ENCODE measurements at regions of chr19 and their contacts with region 1.

Region 1: DNA sequence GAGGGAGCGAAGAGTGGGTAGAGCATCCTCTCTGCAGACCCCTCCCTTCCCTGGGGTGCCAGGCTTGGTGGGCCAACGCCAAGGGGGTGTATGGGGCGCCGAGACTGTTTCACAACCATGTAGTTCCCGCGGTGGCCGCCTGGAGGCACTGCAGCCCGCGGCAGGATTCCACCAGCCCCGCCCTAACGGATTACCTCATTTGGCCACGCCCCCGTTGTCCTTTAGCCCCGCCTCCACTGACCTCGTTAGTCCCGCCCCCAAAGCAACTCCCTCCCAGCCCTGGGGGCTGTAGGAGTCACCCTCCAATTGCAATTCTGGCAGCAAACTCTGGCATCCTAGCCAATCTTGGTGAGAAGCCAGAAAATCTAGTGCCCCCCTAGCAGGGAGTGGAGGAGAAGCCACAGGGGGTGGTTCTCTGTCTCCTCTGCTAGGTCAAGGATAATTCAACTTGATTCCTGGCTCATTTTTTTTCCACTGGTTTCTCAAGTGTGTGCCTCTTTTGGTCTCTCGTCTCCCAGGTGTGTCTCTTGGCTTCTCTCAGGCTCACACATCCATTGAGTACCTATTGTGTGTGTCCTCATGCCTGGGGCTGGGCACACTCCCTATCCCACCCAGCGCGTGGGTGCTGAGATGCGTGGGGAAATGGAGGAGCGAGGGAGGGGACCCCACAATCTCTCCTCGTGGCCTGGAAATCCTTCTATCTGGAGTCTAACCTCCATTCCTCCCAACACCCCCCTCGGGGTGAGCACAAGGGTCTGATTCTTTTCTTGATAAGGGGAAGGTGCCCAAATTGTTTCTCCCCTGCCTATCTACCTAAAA is 2.0 kb downstream of the OLFM2 start:
- DNase-seq: peak; percentile 69
- ATAC-seq: peak; percentile 86
- H3K4me3 ChIP-seq: no peak overlapping the region
- H3K27ac ChIP-seq: no peak overlapping the region
- H3K4me1 ChIP-seq: peaks cover 6% of the 10 kb centered on the region; the same call in 1 of the 2 replicates
- H3K27me3 ChIP-seq: peaks cover 22% of the 10 kb centered on the region
- CTCF ChIP-seq: peak; percentile 94
- POLR2A ChIP-seq: 0 out of 2 replicates have a peak, but pooled peaks have one; percentile 34
- RAD21 ChIP-seq: peak; percentile 97

Region 2: GRCh38 chr19:9891609-9892373 is 42.5 kb before region 1 on chr19:
- CTCF ChIA-PET with region 1: no interaction called
- POLR2A ChIA-PET with region 1: no interaction called
- dilution Hi-C with region 1: no loop called
- in situ Hi-C with region 1: no loop called
- intact Hi-C with region 1: no loop called
- DNase-seq: no peak
- ATAC-seq: no peak
- H3K4me3 ChIP-seq: no peak overlapping the region
- H3K27ac ChIP-seq: no peak overlapping the region
- H3K4me1 ChIP-seq: no peaks in the 10 kb centered on the region
- H3K27me3 ChIP-seq: no peaks in the 10 kb centered on the region; the same call in 1 of the 2 replicates
- CTCF ChIP-seq: no peak
- POLR2A ChIP-seq: no peak
- RAD21 ChIP-seq: no peak

Region 3: DNA sequence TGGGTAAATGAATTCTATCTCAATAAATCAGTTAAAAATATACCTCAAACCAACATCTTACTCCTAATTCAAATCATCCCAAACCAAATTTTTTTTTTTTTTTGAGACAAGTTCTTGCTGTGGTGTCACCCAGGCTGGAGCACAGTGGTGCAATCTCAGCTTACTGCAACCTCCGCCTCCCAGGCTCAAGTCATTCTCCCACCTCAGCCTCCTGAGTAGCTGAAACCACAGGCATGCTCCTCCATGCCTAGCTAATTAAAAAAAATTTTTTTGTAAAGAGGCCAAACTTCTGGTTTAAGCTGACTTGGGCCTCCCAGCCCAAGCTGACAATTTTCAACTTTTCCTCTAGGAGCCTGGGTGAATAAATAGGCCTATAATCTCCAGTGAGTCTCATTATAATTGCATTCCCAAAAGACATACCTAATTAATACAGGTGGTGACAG is 24.1 kb after region 1 on chr19:
- CTCF ChIA-PET with region 1: no interaction called
- POLR2A ChIA-PET with region 1: no interaction called
- dilution Hi-C with region 1: no loop called
- in situ Hi-C with region 1: no loop called
- intact Hi-C with region 1: no loop called
- DNase-seq: peak; percentile 91
- ATAC-seq: peak; percentile 96
- H3K4me3 ChIP-seq: no peak overlapping the region
- H3K27ac ChIP-seq: peak overlapping the region; percentile 64; the same call in 1 of the 2 replicates
- H3K4me1 ChIP-seq: peaks cover 5% of the 10 kb centered on the region
- H3K27me3 ChIP-seq: no peaks in the 10 kb centered on the region
- CTCF ChIP-seq: no peak
- POLR2A ChIP-seq: no peak
- RAD21 ChIP-seq: no peak

Region 4: DNA sequence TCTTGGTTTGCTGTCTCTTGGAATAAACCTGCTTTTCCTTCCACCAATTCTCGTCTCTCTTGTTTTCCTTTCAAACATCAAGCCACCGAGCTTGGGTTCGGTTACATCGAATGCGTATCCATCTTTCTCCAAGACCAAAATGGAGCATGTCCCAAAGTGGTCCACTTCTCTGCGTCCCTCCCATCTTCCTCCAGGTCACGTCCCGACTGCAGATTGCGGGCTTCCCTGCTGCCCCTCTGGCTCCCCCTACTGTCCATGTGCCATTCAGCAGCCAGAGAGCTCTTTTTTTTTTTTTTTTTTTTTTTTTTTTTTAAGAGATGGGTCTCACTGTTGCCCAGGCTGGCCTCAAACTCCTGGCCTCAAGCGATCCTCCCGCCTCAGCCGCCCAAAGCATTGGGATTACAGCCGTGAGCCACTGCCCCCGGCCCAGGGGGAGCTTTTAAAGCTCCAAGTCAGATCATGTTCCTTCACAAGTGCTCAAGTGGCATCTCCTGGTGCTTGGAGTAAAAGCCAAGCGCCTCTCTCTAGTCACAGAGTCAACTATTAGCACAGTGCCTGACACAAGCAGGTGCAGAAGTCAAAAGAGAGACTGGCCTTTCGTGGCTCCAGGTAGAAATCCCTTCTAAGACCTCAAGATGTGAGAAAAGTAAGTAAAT is 66.0 kb after region 1 on chr19:
- CTCF ChIA-PET with region 1: interaction called, 3 read pairs
- POLR2A ChIA-PET with region 1: no interaction called
- dilution Hi-C with region 1: no loop called
- in situ Hi-C with region 1: loop called (anchors 5 kb)
- intact Hi-C with region 1: loop called (anchors 1 kb)
- DNase-seq: peak; percentile 70
- ATAC-seq: peak; percentile 92
- H3K4me3 ChIP-seq: no peak overlapping the region
- H3K27ac ChIP-seq: no peak overlapping the region
- H3K4me1 ChIP-seq: 0 out of 2 replicates have a peak, but pooled peaks cover 1% of the 10 kb centered on the region
- H3K27me3 ChIP-seq: no peaks in the 10 kb centered on the region
- CTCF ChIP-seq: peak; percentile 89
- POLR2A ChIP-seq: no peak
- RAD21 ChIP-seq: peak; percentile 85

Region 5: GRCh38 chr19:10027158-10027693 is 92.9 kb after region 1 on chr19:
- CTCF ChIA-PET with region 1: interaction called, 30 read pairs
- POLR2A ChIA-PET with region 1: interaction called, 5 read pairs
- dilution Hi-C with region 1: no loop called
- in situ Hi-C with region 1: loop called (anchors 5 kb)
- intact Hi-C with region 1: loop called (anchors 1 kb)
- DNase-seq: no peak
- ATAC-seq: no peak
- H3K4me3 ChIP-seq: no peak overlapping the region
- H3K27ac ChIP-seq: no peak overlapping the region
- H3K4me1 ChIP-seq: 0 out of 2 replicates have a peak, but pooled peaks cover 2% of the 10 kb centered on the region
- H3K27me3 ChIP-seq: peaks cover 22% of the 10 kb centered on the region
- CTCF ChIP-seq: no peak
- POLR2A ChIP-seq: no peak
- RAD21 ChIP-seq: no peak

Region 6: DNA sequence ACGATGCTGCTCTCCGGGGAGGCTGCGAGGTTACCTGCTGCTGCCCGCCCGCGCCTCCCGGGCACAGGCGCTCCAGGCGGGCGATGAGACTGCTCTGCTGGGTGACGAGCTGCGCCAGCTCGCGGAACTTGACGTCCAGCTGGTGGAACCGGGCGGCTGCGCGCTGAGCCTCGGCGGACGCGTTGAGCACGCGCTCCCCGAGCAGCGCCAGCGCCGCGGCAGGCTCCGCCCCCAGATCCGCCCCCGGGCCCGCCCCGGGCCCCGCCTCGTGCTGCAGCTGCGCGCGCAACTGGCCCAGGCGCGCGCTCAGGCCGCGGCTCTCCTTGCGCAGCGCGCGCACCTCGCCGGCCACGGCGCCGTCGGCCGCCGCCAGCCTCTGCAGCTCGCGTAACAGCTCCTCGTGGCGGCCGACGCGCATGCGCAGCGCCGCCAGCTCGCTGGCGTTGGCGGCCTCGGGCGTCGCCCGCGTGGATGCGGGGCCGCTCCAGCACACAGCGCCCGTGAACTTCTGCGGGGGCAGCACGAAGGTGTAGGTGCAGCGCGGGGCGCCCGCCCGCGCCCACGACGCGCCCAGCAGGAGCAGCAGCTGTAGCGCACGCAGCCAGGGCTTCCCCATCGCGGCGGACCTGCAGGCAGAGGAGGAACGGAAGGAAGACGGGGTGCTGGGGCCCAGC is 161.7 kb after region 1 on chr19:
- CTCF ChIA-PET with region 1: interaction called, 3 read pairs
- POLR2A ChIA-PET with region 1: no interaction called
- dilution Hi-C with region 1: no loop called
- in situ Hi-C with region 1: no loop called
- intact Hi-C with region 1: loop called (anchors 5 kb)
- DNase-seq: peak; percentile 89
- ATAC-seq: peak; percentile 98
- H3K4me3 ChIP-seq: peak overlapping the region; percentile 55
- H3K27ac ChIP-seq: peak overlapping the region; percentile 79
- H3K4me1 ChIP-seq: peaks cover 4% of the 10 kb centered on the region
- H3K27me3 ChIP-seq: no peaks in the 10 kb centered on the region
- CTCF ChIP-seq: no peak
- POLR2A ChIP-seq: no peak
- RAD21 ChIP-seq: no peak

Region 7: DNA sequence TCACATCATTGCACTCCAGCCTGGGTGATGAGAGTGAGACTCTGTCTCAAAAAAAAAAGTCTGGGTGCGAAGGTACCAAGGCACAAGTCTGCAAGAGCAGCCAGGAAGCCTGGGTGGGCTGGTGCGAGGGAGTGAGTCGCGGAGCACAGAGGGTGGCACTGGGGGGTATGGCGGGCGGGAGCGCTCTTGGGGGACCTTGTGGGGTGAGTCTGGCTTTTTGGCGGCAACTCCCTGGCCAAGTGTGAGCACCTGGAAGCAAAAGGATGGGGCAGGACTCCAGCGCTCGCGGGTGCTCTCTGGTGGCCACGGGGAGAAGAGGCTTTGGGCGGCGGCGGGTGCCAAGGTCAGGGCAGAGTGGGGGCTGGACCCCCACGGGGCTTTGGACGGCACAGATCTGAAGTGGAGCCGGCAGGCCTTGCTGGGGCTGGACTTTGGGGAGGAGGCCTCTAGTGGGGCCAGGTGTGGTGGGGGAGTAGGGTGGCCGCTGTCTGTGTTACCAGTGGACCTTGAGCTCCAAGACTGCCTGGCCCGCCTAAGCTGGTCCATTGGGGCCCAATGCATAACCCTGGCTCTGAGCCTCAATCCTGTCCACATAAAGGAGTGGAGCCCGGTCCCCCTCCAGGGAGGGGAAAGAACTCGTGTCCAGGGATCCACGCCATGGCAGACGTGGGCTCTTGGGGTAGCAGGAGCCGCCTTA is 178.7 kb after region 1 on chr19:
- CTCF ChIA-PET with region 1: no interaction called
- POLR2A ChIA-PET with region 1: no interaction called
- dilution Hi-C with region 1: no loop called
- in situ Hi-C with region 1: no loop called
- intact Hi-C with region 1: loop called (anchors 1 kb)
- DNase-seq: no peak
- ATAC-seq: peak; percentile 61
- H3K4me3 ChIP-seq: no peak overlapping the region
- H3K27ac ChIP-seq: no peak overlapping the region
- H3K4me1 ChIP-seq: no peaks in the 10 kb centered on the region
- H3K27me3 ChIP-seq: no peaks in the 10 kb centered on the region
- CTCF ChIP-seq: peak; percentile 56
- POLR2A ChIP-seq: 0 out of 2 replicates have a peak, but pooled peaks have one; percentile 7
- RAD21 ChIP-seq: peak; percentile 46

Region 8: DNA sequence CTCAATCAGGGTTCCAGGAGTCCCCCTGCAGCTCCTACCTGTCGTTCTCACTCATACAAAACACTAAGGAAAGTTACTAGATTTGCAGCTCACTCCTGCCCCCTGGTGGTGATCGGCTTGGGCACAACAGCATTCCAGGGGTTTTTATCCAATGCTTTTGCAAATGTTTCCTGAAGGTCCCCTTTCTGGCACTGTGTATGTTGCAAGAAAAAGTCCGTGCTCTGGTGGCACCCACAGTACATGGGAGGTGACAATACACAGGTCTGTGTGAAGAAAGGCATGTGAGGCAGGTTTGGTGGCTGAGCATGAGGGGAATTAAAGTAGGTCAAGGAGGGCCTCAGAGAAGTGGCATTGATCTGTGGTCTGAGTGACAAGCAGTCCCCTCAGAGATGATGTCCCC is 454.6 kb after region 1 on chr19:
- CTCF ChIA-PET with region 1: interaction called, 4 read pairs
- POLR2A ChIA-PET with region 1: no interaction called
- dilution Hi-C with region 1: no loop called
- in situ Hi-C with region 1: loop called (anchors 10 kb)
- intact Hi-C with region 1: loop called (anchors 1 kb)
- DNase-seq: peak; percentile 71
- ATAC-seq: peak; percentile 76
- H3K4me3 ChIP-seq: no peak overlapping the region
- H3K27ac ChIP-seq: no peak overlapping the region
- H3K4me1 ChIP-seq: no peaks in the 10 kb centered on the region
- H3K27me3 ChIP-seq: no peaks in the 10 kb centered on the region
- CTCF ChIP-seq: peak; percentile 86
- POLR2A ChIP-seq: no peak
- RAD21 ChIP-seq: peak; percentile 74

Measured in IMR-90 (cell line).